GM12878 (cell line): ENCODE measurements at regions of chr16 and their contacts with region 1.

Region 1: GRCh38 chr16:11639925-11640899 is 28.0 kb upstream of the SNN start:
- DNase-seq: no peak
- ATAC-seq: peak; percentile 15; the same call in 1 of the 3 replicates
- H3K4me3 ChIP-seq: no peak overlapping the region
- H3K27ac ChIP-seq: no peak overlapping the region
- H3K4me1 ChIP-seq: no peaks in the 10 kb centered on the region
- H3K27me3 ChIP-seq: no peaks in the 10 kb centered on the region; a peak in 1 of 4 replicates
- CTCF ChIP-seq: no peak
- EP300 ChIP-seq: no peak
- POLR2A ChIP-seq: no peak
- RAD21 ChIP-seq: no peak

Region 2: DNA sequence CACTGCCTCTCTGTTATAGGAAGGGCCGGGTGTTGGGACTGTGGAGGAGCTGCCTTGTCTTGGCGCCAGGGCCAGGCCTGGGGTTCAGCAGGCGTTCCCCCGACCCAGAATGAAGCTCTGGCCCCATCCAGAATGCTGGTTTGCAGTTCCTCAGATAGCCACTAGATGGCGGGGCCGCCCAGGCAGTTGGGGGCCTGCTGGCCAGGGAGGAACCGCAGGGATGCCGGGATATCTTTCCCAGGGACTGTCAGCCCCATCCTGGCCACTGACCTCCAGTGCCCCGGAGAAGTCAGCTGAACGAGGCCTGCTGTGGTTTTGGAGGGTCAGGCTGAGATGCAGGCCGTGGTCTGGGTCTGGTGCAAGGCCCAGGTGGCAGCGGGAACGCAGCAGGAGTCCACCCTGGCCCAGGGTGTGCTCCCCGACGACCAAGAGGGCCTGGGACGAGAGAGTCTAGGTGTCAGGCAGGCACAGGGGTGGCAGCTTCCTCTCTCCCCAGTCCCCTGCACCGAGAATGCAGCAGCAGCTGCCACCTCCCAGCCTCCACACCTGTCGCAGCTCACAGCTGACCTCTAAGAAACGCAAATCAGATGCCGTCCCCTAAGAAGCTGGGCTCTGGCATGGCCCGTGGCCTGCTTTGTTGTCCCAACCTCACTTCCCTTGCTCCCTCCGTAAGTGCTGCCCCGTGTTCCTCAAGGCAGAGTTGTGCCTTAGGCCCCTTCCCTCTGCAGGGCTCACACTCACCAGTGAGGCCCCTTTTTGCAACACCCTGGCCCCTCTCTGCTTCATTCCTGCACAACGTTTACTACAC is 243.8 kb before region 1 on chr16:
- CTCF ChIA-PET with region 1: interaction called, 11 read pairs
- POLR2A ChIA-PET with region 1: interaction called, 7 read pairs
- RAD21 ChIA-PET with region 1: interaction called, 3 read pairs
- SMC1A ChIA-PET with region 1: interaction called, 8 read pairs
- in situ Hi-C with region 1: no loop called
- intact Hi-C with region 1: no loop called
- DNase-seq: no peak
- ATAC-seq: peak; percentile 90
- H3K4me3 ChIP-seq: no peak overlapping the region
- H3K27ac ChIP-seq: no peak overlapping the region
- H3K4me1 ChIP-seq: no peaks in the 10 kb centered on the region
- H3K27me3 ChIP-seq: no peaks in the 10 kb centered on the region; a peak in 1 of 4 replicates
- CTCF ChIP-seq: peak; percentile 97 to 98 (median 97); a peak in 5 of 6 replicates
- EP300 ChIP-seq: no peak
- POLR2A ChIP-seq: no peak
- RAD21 ChIP-seq: peak; percentile 97

Region 3: DNA sequence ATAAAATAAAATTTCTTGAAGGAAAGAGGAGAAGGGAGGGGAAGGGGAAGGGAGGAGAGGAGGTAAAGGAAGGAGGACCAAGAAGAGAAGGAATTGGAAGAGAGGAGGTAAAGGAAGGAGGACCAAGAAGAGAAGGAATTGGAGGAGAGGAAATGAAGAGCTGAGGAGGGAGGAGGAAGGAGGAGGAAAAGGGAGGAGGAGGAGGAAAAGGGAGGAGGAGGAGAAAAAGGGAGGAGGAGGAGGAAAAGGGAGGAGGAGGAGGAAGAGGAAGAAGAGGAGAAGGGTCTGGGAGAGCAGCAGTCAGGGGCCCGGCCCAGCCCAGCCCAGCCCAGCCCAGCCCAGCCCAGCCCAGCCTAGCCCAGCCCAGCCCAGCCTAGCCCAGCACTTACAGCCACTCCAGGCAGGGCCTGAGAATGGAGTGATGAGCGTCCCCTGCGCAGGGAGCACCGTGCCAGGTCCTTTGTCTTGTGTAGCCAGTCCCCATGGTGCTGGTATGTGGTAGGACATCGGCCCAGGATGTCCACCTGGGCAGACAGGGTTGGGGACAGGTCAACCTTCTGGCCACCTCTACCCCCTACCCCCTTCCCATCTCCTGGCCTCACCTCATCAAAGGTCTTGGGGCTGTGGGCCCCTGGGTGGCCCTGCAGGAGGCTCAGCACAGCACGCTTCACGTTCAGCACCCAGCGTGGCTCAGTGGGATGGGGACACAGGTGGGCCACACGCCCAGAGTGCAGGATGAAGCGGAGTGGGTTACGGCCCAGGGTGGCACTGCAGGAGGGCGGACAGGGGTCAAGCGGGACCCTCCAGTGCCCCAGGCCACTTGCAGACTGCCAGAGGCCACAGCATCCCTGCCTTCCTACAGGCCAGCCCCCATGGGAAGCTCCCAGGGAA is 124.4 kb before region 1 on chr16:
- CTCF ChIA-PET with region 1: no interaction called
- POLR2A ChIA-PET with region 1: no interaction called
- RAD21 ChIA-PET with region 1: no interaction called
- SMC1A ChIA-PET with region 1: no interaction called
- in situ Hi-C with region 1: no loop called
- intact Hi-C with region 1: no loop called
- DNase-seq: no peak
- ATAC-seq: no peak
- H3K4me3 ChIP-seq: no peak overlapping the region
- H3K27ac ChIP-seq: no peak overlapping the region
- H3K4me1 ChIP-seq: no peaks in the 10 kb centered on the region
- H3K27me3 ChIP-seq: no peaks in the 10 kb centered on the region
- CTCF ChIP-seq: no peak
- EP300 ChIP-seq: no peak
- POLR2A ChIP-seq: no peak
- RAD21 ChIP-seq: no peak

Region 4: DNA sequence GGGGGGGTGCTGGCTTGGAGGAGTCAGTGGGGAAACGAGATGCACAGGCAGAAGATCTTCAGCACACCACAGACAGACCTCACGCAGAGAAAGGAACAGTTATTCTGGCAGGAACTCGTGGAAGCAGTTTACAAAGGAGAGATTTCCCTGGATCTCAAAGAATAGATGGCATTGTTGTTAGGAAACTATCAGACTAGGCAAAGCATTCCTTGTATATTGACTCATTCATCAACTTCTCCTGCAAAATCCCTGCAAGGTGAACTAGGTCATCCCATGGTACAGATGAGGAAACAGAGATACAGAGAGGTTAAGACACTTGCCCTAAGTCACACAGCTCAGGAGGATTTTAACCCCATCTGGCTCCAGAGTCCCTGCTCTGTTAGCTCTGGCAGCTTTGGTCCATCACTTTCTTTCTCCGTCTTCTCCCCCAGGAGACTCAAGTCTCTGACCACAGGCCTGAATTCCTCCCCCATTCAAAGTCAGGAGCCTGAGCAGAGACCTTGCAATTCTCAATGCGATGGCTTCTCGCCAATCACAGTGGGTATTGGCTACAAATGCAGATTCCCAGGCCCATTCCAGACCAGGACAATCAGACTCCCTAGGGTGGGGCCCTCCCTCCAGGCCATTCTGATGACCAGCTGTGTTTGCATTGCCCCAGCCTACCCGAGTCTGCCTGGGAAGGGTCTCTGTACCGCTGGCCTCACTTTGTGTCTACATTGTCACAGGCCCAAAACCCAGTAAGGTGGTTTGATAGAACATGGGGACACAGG is 109.9 kb before region 1 on chr16:
- CTCF ChIA-PET with region 1: interaction called, 99 read pairs
- POLR2A ChIA-PET with region 1: interaction called, 3 read pairs
- RAD21 ChIA-PET with region 1: interaction called, 44 read pairs
- SMC1A ChIA-PET with region 1: interaction called, 32 read pairs
- in situ Hi-C with region 1: loop called (anchors 5 kb)
- intact Hi-C with region 1: loop called (anchors 1 kb)
- DNase-seq: no peak
- ATAC-seq: no peak
- H3K4me3 ChIP-seq: no peak overlapping the region
- H3K27ac ChIP-seq: no peak overlapping the region
- H3K4me1 ChIP-seq: no peaks in the 10 kb centered on the region
- H3K27me3 ChIP-seq: peaks cover 0 to 4% of the 10 kb centered on the region in 2 experiments; a peak in 2 of 4 replicates
- CTCF ChIP-seq: no peak
- EP300 ChIP-seq: no peak
- POLR2A ChIP-seq: no peak
- RAD21 ChIP-seq: no peak

Region 5: GRCh38 chr16:11586856-11587642 is 53.2 kb before region 1 on chr16 and contains the start of gene LITAF:
- CTCF ChIA-PET with region 1: interaction called, 7 read pairs
- POLR2A ChIA-PET with region 1: no interaction called
- RAD21 ChIA-PET with region 1: interaction called, 16 read pairs
- SMC1A ChIA-PET with region 1: interaction called, 13 read pairs
- in situ Hi-C with region 1: no loop called
- intact Hi-C with region 1: no loop called
- DNase-seq: no peak
- ATAC-seq: peak; percentile 78
- H3K4me3 ChIP-seq: peak within 1 kb of the TSS; percentile 97
- H3K27ac ChIP-seq: peak within 1 kb of the TSS; percentile 92
- H3K4me1 ChIP-seq: peaks cover 10% of the 10 kb centered on the region; the same call in 1 of the 2 replicates
- H3K27me3 ChIP-seq: no peaks in the 10 kb centered on the region
- CTCF ChIP-seq: peak in 1 of 3 experiments; percentile 19; a peak in 1 of 6 replicates
- EP300 ChIP-seq: no peak
- POLR2A ChIP-seq: peak; percentile 81
- RAD21 ChIP-seq: peak; percentile 33; the same call in 1 of the 2 replicates
- polyA plus RNA-seq, gene LITAF: 144 to 195 TPM

Region 6: GRCh38 chr16:11715246-11715947 is 75.2 kb after region 1 on chr16:
- CTCF ChIA-PET with region 1: interaction called, 71 read pairs
- POLR2A ChIA-PET with region 1: no interaction called
- RAD21 ChIA-PET with region 1: interaction called, 26 read pairs
- SMC1A ChIA-PET with region 1: interaction called, 16 read pairs
- in situ Hi-C with region 1: no loop called
- intact Hi-C with region 1: loop called (anchors 2 kb)
- DNase-seq: no peak
- ATAC-seq: peak; percentile 80
- H3K4me3 ChIP-seq: no peak overlapping the region
- H3K27ac ChIP-seq: peak overlapping the region; percentile 48; the same call in 1 of the 2 replicates
- H3K4me1 ChIP-seq: peaks cover 16% of the 10 kb centered on the region
- H3K27me3 ChIP-seq: no peaks in the 10 kb centered on the region
- CTCF ChIP-seq: 0 out of 6 replicates have a peak, but pooled peaks of 1 of the 3 experiments have one; percentile 3
- EP300 ChIP-seq: no peak
- POLR2A ChIP-seq: no peak
- RAD21 ChIP-seq: peak; percentile 36

Region 7: DNA sequence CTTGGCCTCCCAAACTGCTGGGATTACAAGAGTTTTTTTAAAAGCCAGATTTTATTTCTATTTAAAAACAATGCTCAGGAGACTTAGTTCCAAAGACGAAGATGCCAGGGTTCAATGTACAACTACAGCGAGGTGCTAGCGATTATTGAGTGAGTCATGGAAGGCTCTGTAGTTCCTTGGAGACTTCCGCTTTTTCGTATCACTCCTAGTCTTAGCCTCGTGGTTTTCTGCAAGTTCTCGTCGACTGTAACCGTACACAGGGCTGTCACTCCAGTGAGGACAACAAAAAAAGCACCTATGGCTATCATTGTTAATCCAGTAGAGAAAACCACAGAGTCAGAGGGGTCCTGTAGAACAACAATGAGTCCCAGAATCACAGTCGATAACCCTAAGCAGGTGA is 179.6 kb after region 1 on chr16:
- CTCF ChIA-PET with region 1: interaction called, 3 read pairs
- POLR2A ChIA-PET with region 1: no interaction called
- RAD21 ChIA-PET with region 1: interaction called, 3 read pairs
- SMC1A ChIA-PET with region 1: interaction called, 5 read pairs
- in situ Hi-C with region 1: no loop called
- intact Hi-C with region 1: loop called (anchors 10 kb)
- DNase-seq: no peak
- ATAC-seq: peak; percentile 57
- H3K4me3 ChIP-seq: no peak overlapping the region
- H3K27ac ChIP-seq: no peak overlapping the region
- H3K4me1 ChIP-seq: no peaks in the 10 kb centered on the region
- H3K27me3 ChIP-seq: no peaks in the 10 kb centered on the region
- CTCF ChIP-seq: no peak
- EP300 ChIP-seq: no peak
- POLR2A ChIP-seq: no peak
- RAD21 ChIP-seq: no peak